PC-3 (cell line): ENCODE measurements at regions of chr9 and their contacts with region 1.

Region 1: DNA sequence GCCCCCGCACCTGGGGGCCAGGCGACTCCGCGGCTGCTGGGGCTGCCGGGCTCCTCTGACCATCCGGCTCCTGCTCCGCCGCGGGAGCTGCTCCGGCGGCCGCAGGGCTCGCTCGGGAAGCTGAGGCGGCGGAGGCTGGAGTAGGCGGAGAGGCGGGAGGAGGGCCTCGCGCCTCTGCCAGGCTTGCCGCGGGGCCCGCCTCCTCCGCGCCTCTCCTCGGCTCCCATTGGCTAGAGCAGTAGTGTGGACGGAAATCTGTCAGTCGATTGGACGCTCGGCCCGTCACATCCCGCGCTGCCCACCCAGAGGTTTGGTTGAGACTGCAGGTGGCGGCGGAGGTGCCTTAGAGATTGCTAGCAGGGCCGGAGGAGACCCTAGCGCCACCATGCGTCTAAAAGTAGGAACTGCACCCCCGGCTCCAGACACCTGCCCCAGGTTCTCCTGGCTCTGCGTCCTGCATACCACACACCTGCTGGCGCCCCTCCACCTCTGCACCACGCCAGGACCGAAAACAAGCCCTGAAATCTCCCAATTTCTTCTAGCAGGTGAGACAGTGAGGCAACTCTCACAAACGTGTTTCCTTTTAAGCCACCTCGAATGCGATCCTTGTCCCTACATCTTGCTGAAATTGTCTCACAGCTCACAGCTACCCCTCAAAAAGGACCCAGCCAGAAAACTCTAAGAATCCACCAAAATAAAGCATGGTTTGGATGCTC is at the start of gene SCAI:
- DNase-seq: peak; percentile 97
- ATAC-seq: peak; percentile 99
- H3K4me3 ChIP-seq: peak within 1 kb of the TSS; percentile 75
- H3K27ac ChIP-seq: no peak within 1 kb of the TSS
- H3K4me1 ChIP-seq: no peaks in the 10 kb centered on the region
- H3K27me3 ChIP-seq: no peaks in the 10 kb centered on the region
- CTCF ChIP-seq: peak; percentile 82
- total RNA-seq, gene SCAI: 4.4 and 5.2 TPM in 2 replicates

Region 2: GRCh38 chr9:124940693-124941453 is 202.7 kb before region 1 on chr9 and contains the start of gene GOLGA1:
- CTCF ChIA-PET with region 1: no interaction called
- POLR2A ChIA-PET with region 1: no interaction called
- intact Hi-C with region 1: loop called (anchors 2 kb)
- DNase-seq: peak; percentile 91
- ATAC-seq: peak; percentile 87
- H3K4me3 ChIP-seq: peak within 1 kb of the TSS; percentile 92
- H3K27ac ChIP-seq: peak within 1 kb of the TSS; percentile 90
- H3K4me1 ChIP-seq: peaks cover 12% of the 10 kb centered on the region
- H3K27me3 ChIP-seq: no peaks in the 10 kb centered on the region
- CTCF ChIP-seq: no peak
- total RNA-seq, gene GOLGA1: 8.6 and 13.2 TPM in 2 replicates

Region 3: DNA sequence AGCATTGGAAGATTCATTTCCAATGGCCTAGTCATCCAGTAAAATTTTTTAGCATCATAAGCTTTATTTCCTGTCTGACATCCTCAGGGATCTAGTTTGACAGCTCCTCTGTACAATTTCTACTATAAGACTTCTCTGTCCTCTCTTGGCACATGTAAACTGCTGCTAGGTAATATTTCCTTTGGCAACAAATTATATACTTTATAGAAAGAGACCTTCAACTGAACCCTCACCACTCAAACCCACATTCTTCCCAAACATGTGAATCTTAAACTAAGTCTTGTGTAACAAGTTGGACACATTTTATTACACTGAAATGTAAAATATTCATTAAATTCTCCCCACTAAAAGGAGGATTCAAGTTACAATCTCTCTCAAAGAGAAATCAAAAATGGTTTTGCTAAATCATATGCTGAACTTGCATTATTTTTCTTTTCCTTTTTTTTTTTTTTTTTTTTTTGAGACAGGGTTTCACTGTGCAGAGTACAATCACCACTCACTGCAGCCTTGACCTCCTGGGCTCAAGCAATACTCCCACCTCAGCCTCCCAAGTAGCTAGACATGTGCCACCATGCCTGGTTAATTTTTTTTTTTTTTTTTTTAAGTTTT is 37.1 kb before region 1 on chr9:
- CTCF ChIA-PET with region 1: no interaction called
- POLR2A ChIA-PET with region 1: no interaction called
- intact Hi-C with region 1: loop called (anchors 5 kb)
- DNase-seq: peak; percentile 33
- ATAC-seq: peak; percentile 61
- H3K4me3 ChIP-seq: no peak overlapping the region
- H3K27ac ChIP-seq: no peak overlapping the region
- H3K4me1 ChIP-seq: no peaks in the 10 kb centered on the region
- H3K27me3 ChIP-seq: no peaks in the 10 kb centered on the region
- CTCF ChIP-seq: no peak

Region 4: GRCh38 chr9:125214186-125214585 is 70.7 kb after region 1 on chr9:
- CTCF ChIA-PET with region 1: no interaction called
- POLR2A ChIA-PET with region 1: no interaction called
- intact Hi-C with region 1: no loop called
- DNase-seq: no peak
- ATAC-seq: no peak
- H3K4me3 ChIP-seq: no peak overlapping the region
- H3K27ac ChIP-seq: no peak overlapping the region
- H3K4me1 ChIP-seq: no peaks in the 10 kb centered on the region
- H3K27me3 ChIP-seq: no peaks in the 10 kb centered on the region
- CTCF ChIP-seq: no peak